Heart left ventricle (tissue), 16 donors: ENCODE measurements at regions of chr3 and their contacts with region 1.

Region 1: DNA sequence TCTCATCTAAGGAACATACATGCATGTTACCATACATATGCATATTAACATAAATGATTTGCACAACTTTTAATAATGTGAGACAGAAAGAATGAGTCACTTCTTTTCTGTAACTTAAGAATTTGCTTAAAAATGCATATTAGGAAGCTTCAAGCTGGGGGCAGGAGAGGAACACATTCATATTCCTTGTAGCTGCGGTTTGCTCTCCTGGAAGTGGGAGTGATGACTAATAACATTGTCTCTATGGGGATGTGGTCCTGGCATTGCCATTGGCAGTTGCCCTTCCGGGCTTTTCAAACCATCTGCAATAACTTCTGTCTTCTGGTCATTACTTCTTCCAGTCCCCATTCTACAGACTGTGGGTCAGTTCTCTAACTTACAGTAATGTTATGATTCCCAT is 15.6 kb downstream of the CHST2 start:
- DNase-seq: no peak
- ATAC-seq: peak in 3 of 4 donors; percentile 48 to 65 (median 54)
- H3K4me3 ChIP-seq: no peak overlapping the region
- H3K27ac ChIP-seq: peak overlapping the region in 1 of 12 donors; percentile 12
- H3K4me1 ChIP-seq: peaks cover 0 to 20% (median 4%) of the 10 kb centered on the region in 12 donors
- H3K27me3 ChIP-seq: no peaks in the 10 kb centered on the region
- CTCF ChIP-seq: no peak
- POLR2A ChIP-seq: no peak

Region 2: GRCh38 chr3:143443851-143444331 is 308.7 kb after region 1 on chr3:
- intact Hi-C with region 1: loop called in 1 of 10 experiments (anchors 5 kb)
- DNase-seq: peak in 4 of 5 donors; percentile 60 to 75 (median 70)
- ATAC-seq: peak; percentile 83 to 98 (median 96)
- H3K4me3 ChIP-seq: no peak overlapping the region
- H3K27ac ChIP-seq: peak overlapping the region in 11 of 12 donors; percentile 23 to 80 (median 62)
- H3K4me1 ChIP-seq: peaks cover 0 to 26% (median 9%) of the 10 kb centered on the region in 12 donors
- H3K27me3 ChIP-seq: no peaks in the 10 kb centered on the region
- CTCF ChIP-seq: no peak
- POLR2A ChIP-seq: no peak